ENCODE measurements at regions of chr20 and their contacts with region 1.

Region 1: GRCh38 chr20:31630187-31630790 is 7.4 kb upstream of the COX4I2 start:
- DNase-seq: no peak
- H3K4me3 ChIP-seq: no peak overlapping the region
- CTCF ChIP-seq: no peak
- POLR2A ChIP-seq: no peak

Region 2: GRCh38 chr20:32391003-32391402 is 760.7 kb after region 1 on chr20:
- intact Hi-C with region 1: loop called (anchors 10 kb)
- DNase-seq: no peak
- H3K4me3 ChIP-seq: no peak overlapping the region
- CTCF ChIP-seq: no peak
- POLR2A ChIP-seq: no peak